Breast epithelium (tissue), 4 donors: ENCODE measurements at regions of chr16 and their contacts with region 1.

Region 1: DNA sequence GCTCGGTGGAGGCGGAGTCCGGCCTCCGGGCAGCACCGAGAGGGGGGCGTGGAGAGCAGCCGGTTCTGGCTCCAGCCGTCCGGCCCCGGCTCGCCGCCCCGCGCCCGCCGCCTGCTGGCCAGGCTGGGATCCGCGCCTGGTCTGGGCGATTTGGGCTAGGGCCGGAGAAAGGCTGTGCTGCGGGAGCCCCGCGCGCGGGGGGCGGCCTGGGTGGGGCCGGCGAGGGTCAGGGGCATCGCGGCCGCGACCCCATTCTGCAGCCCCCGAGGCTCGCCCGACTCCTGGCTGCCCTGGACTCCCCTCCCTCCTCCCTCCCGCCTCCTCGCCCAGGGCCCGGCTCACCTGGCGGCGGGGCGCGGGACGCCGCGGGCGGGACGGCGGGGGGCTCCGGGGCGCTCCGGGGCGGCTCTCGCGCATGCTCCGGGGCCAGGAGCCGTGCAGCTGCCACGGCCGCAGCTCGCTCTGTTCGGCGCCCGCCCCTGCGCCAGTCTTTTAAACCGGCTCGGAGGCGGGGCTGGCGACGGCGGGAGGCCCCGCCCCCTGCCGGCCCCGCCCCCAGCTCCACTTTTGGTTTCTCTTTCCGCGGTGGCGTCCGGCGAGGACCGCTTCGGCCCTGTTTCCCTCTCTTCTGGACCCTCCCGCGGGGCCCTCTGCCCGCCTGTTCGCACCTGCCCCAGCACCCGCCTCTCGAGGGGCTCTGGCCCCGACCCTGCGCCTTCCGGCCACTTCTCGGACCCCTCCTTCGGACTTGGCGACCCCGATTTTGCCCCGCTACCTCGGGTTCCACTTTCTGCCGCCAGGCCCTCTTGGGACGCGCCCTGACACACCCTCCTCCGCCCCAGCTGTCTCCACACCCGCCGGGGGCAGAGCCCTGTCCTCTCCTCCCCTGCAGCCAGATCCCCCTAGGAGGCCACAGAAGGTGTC is at the start of gene SOCS1:
- DNase-seq: peak; percentile 78 to 84
- H3K4me3 ChIP-seq: peak within 1 kb of the TSS; percentile 68 to 94 (median 84)
- H3K27ac ChIP-seq: peak within 1 kb of the TSS; percentile 98 to 99
- H3K4me1 ChIP-seq: peaks cover 2 to 8% of the 10 kb centered on the region in 2 donors
- H3K27me3 ChIP-seq: no peaks in the 10 kb centered on the region
- CTCF ChIP-seq: peak; percentile 59 to 99 (median 91)
- POLR2A ChIP-seq: peak; percentile 20
- total RNA-seq, gene SOCS1: 4.1 to 9.0 (median 5.6) TPM

Region 2: DNA sequence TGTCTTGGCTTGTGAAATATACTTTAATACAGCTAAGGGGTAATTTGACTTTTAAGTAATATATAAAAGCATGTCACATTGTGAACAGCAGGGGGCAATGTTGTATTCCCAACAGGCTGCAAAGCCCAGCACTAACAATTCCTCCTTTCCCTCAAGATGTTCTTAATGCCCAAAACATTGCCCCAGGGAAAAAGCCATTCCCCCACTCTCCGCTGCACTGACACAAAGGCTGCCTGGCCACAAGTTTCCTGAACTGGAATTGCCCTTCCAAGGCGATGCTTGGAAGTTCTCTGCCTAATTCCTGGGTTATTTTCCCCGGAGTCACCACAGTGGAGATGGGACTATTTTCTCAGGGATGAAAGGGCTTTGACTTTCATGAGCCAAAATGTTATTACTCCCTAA is 284.4 kb before region 1 on chr16:
- intact Hi-C with region 1: loop called (anchors 5 kb)
- DNase-seq: peak in 1 of 2 donors; percentile 32
- H3K4me3 ChIP-seq: no peak overlapping the region
- H3K27ac ChIP-seq: peak overlapping the region; percentile 36 to 49
- H3K4me1 ChIP-seq: no peaks in the 10 kb centered on the region
- H3K27me3 ChIP-seq: no peaks in the 10 kb centered on the region
- CTCF ChIP-seq: peak; percentile 77 to 88 (median 84)
- POLR2A ChIP-seq: no peak